ENCODE measurements at regions of chr13 and their contacts with region 1.

Region 1: GRCh38 chr13:23915308-23915707 is 18.0 kb upstream of the C1QTNF9B start:
- DNase-seq: no peak
- H3K4me3 ChIP-seq: no peak overlapping the region
- H3K27ac ChIP-seq: no peak overlapping the region
- H3K27me3 ChIP-seq: peaks cover 0 to 14% (median 0%) of the 10 kb centered on the region in 45 donors
- CTCF ChIP-seq: no peak

Region 2: GRCh38 chr13:23960566-23961156 is 45.4 kb after region 1 on chr13:
- intact Hi-C with region 1: loop called in 1 of 2 experiments (anchors 5 kb)
- DNase-seq: no peak
- H3K4me3 ChIP-seq: no peak overlapping the region
- H3K27ac ChIP-seq: no peak overlapping the region
- H3K27me3 ChIP-seq: peaks cover 0 to 3% (median 0%) of the 10 kb centered on the region in 45 donors
- CTCF ChIP-seq: peak; percentile 36 to 80 (median 62)

Region 3: DNA sequence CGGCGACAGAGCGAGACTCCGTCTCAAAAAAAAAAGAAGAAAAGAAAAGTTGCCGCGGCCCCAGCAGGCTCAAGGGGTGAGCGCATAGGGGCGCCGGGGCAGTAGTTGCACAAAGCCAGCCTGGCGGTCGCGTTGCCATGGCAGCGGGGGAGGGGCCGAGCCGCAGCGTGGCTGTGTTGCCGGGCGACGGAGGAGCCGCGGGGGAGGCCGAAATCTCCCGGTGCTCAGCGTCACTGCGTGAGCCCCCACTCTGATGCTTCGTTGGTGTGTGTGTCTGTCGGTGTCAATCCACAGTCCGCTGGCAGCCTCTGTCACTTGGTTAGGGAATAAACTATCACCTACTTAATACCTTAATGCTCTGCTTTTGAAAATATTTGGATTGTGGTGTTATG is 64.8 kb after region 1 on chr13:
- intact Hi-C with region 1: no loop called
- DNase-seq: peak; percentile 48 to 96 (median 91)
- H3K4me3 ChIP-seq: peak overlapping the region; percentile 44 to 85 (median 70)
- H3K27ac ChIP-seq: peak overlapping the region in 40 of 59 donors; percentile 1 to 84 (median 58)
- H3K27me3 ChIP-seq: no peaks in the 10 kb centered on the region
- CTCF ChIP-seq: peak in 3 of 56 donors; percentile 3 to 23 (median 18)

Region 4: DNA sequence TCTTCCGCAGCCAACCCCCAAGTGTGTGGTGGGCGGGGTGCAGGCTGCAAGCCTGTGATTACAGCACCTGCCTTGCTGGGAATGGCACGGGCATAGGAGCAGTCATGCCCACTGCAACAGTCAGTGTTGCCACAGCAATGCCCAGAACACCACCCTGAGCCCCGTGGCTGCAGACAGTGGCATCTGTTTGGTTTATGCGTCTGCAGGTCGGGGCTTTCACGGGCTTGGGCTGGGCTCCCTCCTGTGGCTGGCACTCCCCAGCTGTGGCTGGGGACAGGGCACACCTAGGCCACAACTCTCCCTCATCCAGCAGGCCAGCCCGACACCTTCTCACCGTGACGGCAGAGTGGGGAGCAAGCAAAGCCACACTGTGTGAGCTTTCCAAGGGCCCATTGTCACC is 97.3 kb after region 1 on chr13:
- intact Hi-C with region 1: loop called (anchors 5 kb)
- DNase-seq: peak in 1 of 10 donors; percentile 50
- H3K4me3 ChIP-seq: no peak overlapping the region
- H3K27ac ChIP-seq: no peak overlapping the region
- H3K27me3 ChIP-seq: no peaks in the 10 kb centered on the region
- CTCF ChIP-seq: peak in 30 of 56 donors; percentile 11 to 53 (median 28)

Measured in dorsolateral prefrontal cortex (tissue), 120 donors.